Psoas muscle (tissue), 8 donors: ENCODE measurements at regions of chr9 and their contacts with region 1.

Region 1: GRCh38 chr9:90795871-90796317 is 5.7 kb upstream of the SYK start:
- DNase-seq: no peak
- ATAC-seq: no peak
- H3K4me3 ChIP-seq: no peak overlapping the region
- H3K27ac ChIP-seq: no peak overlapping the region
- H3K4me1 ChIP-seq: peaks cover under 1% of the 10 kb centered on the region
- H3K27me3 ChIP-seq: peaks cover 0 to 28% (median 2%) of the 10 kb centered on the region in 3 donors
- CTCF ChIP-seq: no peak

Region 2: GRCh38 chr9:90735952-90736351 is 59.9 kb before region 1 on chr9:
- intact Hi-C with region 1: loop called in 1 of 2 experiments (anchors 10 kb)
- DNase-seq: no peak
- ATAC-seq: no peak
- H3K4me3 ChIP-seq: no peak overlapping the region
- H3K27ac ChIP-seq: no peak overlapping the region
- H3K4me1 ChIP-seq: no peaks in the 10 kb centered on the region
- H3K27me3 ChIP-seq: no peaks in the 10 kb centered on the region
- CTCF ChIP-seq: no peak